Colonic mucosa (tissue), 4 donors: ENCODE measurements at regions of chr5 and their contacts with region 1.

Region 1: DNA sequence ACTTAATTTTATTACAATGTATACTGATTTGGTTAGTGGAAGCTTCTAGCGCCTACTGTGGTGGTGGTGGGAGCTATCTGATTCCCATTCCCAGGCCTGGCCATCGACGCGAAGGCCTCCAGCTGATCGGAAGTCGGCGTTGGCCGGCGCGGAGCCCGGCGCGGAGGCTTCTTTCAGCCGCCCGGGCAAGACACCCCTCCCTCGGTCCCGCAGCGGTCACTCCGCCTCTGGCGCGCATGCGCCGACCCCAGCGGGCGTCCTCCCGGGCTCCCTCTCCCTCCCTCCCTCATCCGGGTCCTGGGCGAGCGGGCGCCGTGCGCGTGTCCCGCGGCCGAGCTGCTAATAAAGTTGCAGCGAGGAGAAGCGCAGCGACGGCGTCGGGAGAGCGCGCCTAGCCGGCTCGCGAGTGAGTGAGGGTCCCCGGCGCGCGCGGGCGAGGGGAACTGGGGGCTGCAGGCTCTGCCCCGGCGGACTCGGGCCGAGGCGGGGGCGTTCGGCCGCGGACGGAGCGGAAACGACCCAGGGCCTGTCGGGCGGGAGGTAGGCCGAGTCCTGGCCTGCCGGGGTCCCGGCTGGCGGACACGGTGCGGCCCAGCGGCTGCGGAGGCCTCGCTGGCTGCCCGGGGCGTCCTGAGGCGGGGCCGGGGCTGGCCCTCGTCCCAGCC is at the start of gene SMAD5:
- DNase-seq: peak; percentile 95
- H3K4me3 ChIP-seq: peak within 1 kb of the TSS; percentile 97
- H3K27ac ChIP-seq: peak within 1 kb of the TSS; percentile 98
- H3K4me1 ChIP-seq: peaks cover 7% of the 10 kb centered on the region
- H3K27me3 ChIP-seq: no peaks in the 10 kb centered on the region
- CTCF ChIP-seq: no peak
- total RNA-seq, gene SMAD5: 51.9 to 64.1 TPM

Region 2: DNA sequence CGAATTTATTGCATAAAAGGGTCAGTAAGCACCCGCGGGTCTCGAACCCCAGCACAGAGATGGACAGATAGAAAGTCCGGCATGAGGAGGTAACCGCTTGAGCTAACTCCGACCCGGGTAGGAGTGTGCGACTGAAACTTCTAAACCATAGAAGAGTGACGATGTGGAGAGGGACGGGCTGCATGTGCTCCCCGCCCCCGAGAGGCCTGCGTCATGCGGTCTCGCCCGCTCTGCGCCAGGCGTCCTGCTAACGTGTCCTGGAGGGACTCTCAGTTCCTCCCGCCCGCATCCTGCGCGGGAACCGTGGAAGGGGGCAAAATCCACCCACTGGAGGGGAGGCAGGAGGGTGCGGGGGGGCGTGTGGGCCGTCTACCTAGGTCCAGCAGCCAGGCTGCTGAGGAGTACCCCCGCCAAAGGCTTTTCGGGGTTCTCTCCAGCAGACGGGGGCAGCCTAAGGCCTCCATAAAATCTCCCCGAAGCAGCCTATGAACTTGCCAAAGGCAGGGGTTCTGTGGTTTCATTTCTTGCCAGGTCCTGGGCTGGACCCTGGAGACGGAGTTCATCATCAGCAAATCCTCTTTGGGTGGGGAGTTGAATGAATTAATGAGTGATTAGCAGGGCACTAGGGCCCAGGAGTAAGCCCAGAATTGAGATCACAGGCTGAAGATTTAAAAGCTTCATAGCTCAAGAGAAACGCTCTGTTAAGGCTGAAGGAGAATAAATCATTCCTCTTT is 52.0 kb before region 1 on chr5:
- intact Hi-C with region 1: loop called (anchors 10 kb)
- DNase-seq: peak; percentile 98
- H3K4me3 ChIP-seq: peak overlapping the region; percentile 26
- H3K27ac ChIP-seq: peak overlapping the region; percentile 62
- H3K4me1 ChIP-seq: peaks cover 5% of the 10 kb centered on the region
- H3K27me3 ChIP-seq: no peaks in the 10 kb centered on the region
- CTCF ChIP-seq: no peak